ENCODE measurements at regions of chr5 and their contacts with region 1.

Region 1: DNA sequence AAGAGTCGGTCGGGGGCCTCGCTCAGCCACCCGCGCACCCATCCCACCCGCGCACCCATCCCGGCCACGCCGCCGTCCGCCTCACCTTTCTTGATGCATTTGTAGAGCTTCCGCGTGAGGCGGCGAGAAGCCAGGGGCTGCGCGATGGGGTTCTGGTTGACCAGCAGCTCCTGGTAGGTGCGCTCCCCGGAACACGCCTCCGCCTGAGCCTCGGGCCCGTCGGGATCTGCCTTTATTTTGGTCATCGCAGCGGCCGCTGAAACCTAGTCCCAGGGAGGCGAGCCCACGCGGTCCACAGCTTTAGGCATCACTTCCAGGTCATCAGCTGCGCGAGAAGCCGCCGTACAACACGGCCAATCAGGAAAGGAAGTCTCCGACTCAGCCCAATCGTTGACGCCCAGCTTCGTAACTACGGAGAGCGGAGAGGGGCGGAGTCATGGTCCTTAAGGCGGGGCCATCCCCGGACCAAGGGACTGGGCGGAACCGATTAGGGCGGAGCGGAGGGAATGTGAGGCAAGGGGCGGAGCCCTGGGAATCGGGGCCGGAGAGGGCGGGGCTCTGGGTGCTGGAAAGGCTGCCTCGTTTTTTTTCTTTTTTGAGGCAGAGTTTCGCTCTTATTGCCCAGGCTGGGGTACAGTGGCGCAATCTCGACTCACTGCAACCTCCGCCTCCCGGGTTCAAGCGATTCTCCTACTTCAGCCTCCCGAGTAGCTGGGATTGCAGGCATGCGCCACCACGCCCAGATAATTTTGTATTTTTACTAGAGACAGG is at the start of gene NHP2:
- DNase-seq: peak; percentile 98 to 99
- H3K4me3 ChIP-seq: peak within 1 kb of the TSS; percentile 69 to 75
- H3K27ac ChIP-seq: peak within 1 kb of the TSS; percentile 76
- H3K4me1 ChIP-seq: peaks cover 0 to 25% (median 17%) of the 10 kb centered on the region in 4 donors
- H3K27me3 ChIP-seq: no peaks in the 10 kb centered on the region
- CTCF ChIP-seq: no peak

Region 2: DNA sequence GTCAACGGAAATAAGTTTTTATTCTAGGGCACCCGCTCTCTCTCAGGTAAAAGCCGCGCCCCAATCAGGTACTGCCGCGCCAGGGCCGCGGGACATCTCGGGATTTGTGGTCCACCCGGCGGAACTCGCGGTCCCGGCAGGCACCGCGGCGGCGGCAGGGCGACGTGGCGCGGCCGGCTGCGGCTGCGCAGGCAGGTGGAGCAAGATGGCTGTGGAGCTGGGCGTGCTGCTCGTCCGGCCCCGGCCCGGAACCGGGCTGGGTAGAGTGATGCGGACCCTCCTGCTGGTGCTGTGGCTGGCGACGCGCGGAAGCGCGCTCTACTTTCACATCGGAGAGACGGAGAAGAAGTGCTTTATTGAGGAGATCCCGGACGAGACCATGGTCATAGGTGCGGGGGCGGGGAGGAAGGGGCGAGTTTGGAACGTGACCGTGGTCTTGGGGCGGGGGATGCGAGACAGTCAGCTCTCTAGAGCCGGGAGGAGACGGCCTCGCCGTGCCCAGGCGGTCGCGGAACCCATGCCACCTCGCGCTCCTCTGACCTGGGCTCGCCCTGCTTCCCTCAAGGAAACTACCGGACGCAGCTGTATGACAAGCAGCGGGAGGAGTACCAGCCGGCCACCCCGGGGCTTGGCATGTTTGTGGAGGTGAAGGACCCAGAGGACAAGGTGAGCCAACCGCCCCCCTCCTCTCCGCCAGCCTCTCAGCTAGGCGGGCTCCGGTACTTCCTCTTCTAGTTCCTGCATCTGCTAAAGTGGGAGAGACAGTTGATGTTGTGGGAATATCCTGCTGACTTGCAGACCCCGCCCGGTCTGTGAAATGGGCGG is 561.5 kb before region 1 on chr5 and contains the start of gene TMED9:
- intact Hi-C with region 1: loop called (anchors 10 kb)
- DNase-seq: peak; percentile 75 to 89
- H3K4me3 ChIP-seq: peak within 1 kb of the TSS; percentile 91 to 99
- H3K27ac ChIP-seq: peak within 1 kb of the TSS; percentile 81 to 84
- H3K4me1 ChIP-seq: peaks cover 0 to 18% (median 16%) of the 10 kb centered on the region in 4 donors
- H3K27me3 ChIP-seq: peaks cover 0 to 27% of the 10 kb centered on the region in 2 donors
- CTCF ChIP-seq: peak; percentile 23 to 25

Region 3: GRCh38 chr5:178204182-178204894 is 50.6 kb after region 1 on chr5 and contains the start of gene HNRNPAB:
- intact Hi-C with region 1: loop called (anchors 2 kb)
- DNase-seq: peak; percentile 93 to 97
- H3K4me3 ChIP-seq: peak within 1 kb of the TSS; percentile 83 to 92
- H3K27ac ChIP-seq: peak within 1 kb of the TSS; percentile 83 to 90
- H3K4me1 ChIP-seq: peaks cover 0 to 27% (median 18%) of the 10 kb centered on the region in 4 donors
- H3K27me3 ChIP-seq: no peaks in the 10 kb centered on the region
- CTCF ChIP-seq: peak in 1 of 2 experiments; percentile 26

Region 4: DNA sequence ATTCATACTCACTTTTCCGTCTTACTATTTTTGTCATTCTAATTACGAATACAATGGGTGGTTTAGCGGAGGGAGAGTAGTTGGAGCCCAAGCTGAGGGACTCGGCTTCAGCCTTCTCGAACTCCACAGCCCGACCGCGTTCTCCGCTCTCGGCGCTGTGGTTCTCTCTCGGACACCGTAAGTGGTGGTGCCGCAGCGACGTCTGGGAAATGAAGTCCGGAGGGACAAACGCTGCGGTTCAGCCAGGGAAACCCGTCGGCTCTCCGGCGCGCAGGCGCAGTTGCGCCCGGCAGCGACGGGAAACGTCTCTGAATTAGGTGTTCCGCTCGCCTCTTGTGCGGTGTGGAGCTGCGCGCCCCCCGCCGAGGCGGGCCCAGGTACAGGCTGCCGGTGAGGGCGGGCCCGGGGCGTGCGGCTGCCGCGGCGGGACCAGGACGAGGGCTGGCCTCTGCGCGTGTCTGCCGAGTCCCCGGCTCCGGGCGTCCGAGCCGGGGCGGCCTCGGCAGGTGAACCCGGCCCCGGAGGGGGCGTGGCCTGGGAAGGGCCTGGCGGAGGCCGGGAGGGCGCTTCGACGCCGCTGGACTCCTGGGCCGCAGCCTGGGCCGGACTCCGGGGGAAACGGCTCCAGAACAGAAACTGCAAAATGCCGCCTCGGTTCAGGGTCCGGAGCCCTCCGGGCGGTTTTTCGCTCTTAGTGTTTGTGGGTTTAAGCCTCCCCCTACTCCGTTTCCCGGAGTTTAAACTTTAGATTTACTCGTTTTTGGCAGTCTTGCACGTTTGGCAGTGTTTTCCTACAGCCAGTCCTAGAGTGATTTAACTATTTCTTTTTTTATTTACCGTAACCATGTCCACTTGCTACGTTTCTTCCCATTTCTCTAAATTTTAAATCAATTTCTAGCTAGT is 870.0 kb after region 1 on chr5 and contains the start of gene ZNF879:
- intact Hi-C with region 1: loop called (anchors 5 kb)
- DNase-seq: peak; percentile 93 to 95
- H3K4me3 ChIP-seq: peak within 1 kb of the TSS; percentile 61 to 79
- H3K27ac ChIP-seq: peak within 1 kb of the TSS; percentile 69 to 84
- H3K4me1 ChIP-seq: peaks cover 0 to 8% (median 3%) of the 10 kb centered on the region in 4 donors
- H3K27me3 ChIP-seq: no peaks in the 10 kb centered on the region
- CTCF ChIP-seq: no peak

Region 5: DNA sequence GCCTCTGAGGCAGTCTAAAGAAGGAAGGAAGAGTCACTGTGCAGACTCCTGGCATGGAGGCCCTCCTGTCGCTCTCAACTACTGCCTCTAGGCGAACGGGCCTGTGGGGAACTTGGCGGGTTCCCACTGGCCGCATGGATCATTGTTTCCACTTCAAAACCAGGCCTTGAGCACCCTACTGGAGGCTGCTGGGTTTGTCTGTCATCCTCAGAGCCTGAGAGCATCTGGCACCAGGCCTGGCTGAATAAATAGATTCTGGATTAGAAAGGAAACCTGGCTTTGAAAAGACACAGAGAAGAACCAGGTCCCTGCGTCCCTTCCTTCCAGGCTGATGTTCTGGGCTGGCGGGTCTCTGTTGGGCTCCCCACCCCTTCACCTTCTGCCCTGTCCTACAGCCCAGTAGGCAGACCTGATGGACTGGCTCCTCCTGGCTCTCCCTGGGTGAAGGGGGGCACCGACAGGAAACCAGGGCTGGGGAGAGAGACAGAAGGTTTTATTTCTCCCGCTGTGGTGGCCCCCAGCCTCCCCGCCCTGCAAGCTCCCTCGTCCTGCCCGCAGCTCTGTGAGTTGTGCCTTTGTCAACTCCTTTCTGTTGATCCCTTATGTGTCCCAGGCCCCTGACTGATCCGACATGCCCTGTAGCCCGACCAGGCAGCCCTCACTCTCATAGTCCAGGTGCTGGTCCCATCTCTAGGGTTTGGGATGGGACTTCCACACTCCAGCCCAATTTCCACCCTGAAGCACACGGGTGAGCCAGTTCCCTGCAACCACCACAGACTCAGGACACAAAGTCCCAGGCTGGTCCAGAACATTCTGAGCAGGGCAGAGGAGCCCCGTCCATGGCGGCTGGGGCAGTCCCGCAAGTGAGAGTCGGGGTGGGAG is 1141.4 kb after region 1 on chr5:
- intact Hi-C with region 1: no loop called
- DNase-seq: peak; percentile 58 to 83
- H3K4me3 ChIP-seq: no peak overlapping the region
- H3K27ac ChIP-seq: peak overlapping the region; percentile 53 to 60
- H3K4me1 ChIP-seq: peaks cover 0 to 55% (median 38%) of the 10 kb centered on the region in 4 donors
- H3K27me3 ChIP-seq: no peaks in the 10 kb centered on the region
- CTCF ChIP-seq: peak; percentile 21 to 24